CD8-positive, alpha-beta T cell (primary cell): ENCODE measurements at regions of chr14 and their contacts with region 1.

Region 1: GRCh38 chr14:22549981-22550673 is 38.9 kb downstream of the DAD1 start:
- DNase-seq: peak in 7 of 9 experiments; percentile 53 to 86 (median 78)
- ATAC-seq: peak; percentile 63
- H3K4me3 ChIP-seq: peak overlapping the region; percentile 2 to 14
- H3K4me3 Mint-ChIP-seq: peak overlapping the region; percentile 79
- H3K27ac ChIP-seq: peak overlapping the region; percentile 55 to 97
- H3K27ac Mint-ChIP-seq: peak overlapping the region; percentile 93
- H3K4me1 ChIP-seq: peaks cover 96% of the 10 kb centered on the region
- H3K4me1 Mint-ChIP-seq: peaks cover 94% of the 10 kb centered on the region
- H3K27me3 ChIP-seq: no peaks in the 10 kb centered on the region
- H3K27me3 Mint-ChIP-seq: no peaks in the 10 kb centered on the region
- CTCF ChIP-seq: no peak

Region 2: GRCh38 chr14:22531451-22532344 is 18.4 kb before region 1 on chr14:
- CTCF ChIA-PET with region 1: interaction called, 225 read pairs
- POLR2A ChIA-PET with region 1: interaction called, 348 read pairs
- intact Hi-C with region 1: loop called in 1 of 2 experiments (anchors 1 kb)
- DNase-seq: peak in 2 of 9 experiments; percentile 44 to 70
- ATAC-seq: peak; percentile 62
- H3K4me3 ChIP-seq: peak overlapping the region; percentile 38 to 43
- H3K4me3 Mint-ChIP-seq: peak overlapping the region; percentile 81
- H3K27ac ChIP-seq: peak overlapping the region; percentile 54 to 83
- H3K27ac Mint-ChIP-seq: peak overlapping the region; percentile 97
- H3K4me1 ChIP-seq: peaks cover 94% of the 10 kb centered on the region
- H3K4me1 Mint-ChIP-seq: peaks cover 90% of the 10 kb centered on the region
- H3K27me3 ChIP-seq: no peaks in the 10 kb centered on the region
- H3K27me3 Mint-ChIP-seq: no peaks in the 10 kb centered on the region
- CTCF ChIP-seq: no peak